Gastrocnemius medialis (tissue), 4 donors: ENCODE measurements at regions of chr15 and their contacts with region 1.

Region 1: DNA sequence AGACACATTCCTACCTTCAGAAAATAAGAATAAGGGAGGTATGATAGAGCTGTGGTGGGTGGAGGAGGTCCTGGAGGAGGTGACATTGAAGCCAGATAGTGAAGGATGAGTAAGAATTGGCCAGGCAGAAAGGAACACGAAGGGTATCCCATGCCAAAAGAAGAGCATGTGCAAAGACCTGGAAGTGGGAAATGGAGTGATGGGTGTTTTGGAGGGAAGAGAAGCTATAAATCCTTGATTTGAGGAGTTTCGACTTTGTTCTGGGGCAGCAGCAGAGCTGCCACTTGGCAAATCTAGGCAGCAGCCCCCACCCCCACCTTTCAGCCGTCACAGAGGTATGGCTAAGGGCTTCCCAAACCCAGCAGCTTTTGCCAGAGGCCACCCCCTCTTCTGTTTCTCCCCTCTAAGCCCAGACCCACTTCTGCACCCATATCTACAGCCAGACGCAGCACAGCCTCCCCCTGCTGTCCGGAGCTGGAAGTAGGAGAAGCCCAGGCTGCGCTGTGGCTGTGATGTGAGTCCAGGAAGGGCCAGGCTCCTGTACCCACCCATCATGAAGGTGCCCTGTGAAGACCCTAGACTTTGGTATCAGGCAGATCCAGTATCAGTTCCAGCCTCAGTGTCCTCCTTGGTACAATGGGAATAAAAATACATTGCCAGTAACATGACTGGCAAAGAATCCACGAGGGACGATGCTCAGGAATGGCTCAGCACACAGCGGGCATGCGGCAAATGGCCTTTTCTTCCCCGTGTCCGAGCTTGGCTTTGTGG is 188.7 kb upstream of the LINGO1 start:
- DNase-seq: no peak
- ATAC-seq: no peak
- H3K4me3 ChIP-seq: no peak overlapping the region
- H3K27ac ChIP-seq: no peak overlapping the region
- H3K4me1 ChIP-seq: no peaks in the 10 kb centered on the region
- H3K27me3 ChIP-seq: peaks cover 24 to 40% (median 34%) of the 10 kb centered on the region in 3 donors
- CTCF ChIP-seq: peak in 2 of 5 experiments; percentile 37 to 58
- POLR2A ChIP-seq: no peak

Region 2: DNA sequence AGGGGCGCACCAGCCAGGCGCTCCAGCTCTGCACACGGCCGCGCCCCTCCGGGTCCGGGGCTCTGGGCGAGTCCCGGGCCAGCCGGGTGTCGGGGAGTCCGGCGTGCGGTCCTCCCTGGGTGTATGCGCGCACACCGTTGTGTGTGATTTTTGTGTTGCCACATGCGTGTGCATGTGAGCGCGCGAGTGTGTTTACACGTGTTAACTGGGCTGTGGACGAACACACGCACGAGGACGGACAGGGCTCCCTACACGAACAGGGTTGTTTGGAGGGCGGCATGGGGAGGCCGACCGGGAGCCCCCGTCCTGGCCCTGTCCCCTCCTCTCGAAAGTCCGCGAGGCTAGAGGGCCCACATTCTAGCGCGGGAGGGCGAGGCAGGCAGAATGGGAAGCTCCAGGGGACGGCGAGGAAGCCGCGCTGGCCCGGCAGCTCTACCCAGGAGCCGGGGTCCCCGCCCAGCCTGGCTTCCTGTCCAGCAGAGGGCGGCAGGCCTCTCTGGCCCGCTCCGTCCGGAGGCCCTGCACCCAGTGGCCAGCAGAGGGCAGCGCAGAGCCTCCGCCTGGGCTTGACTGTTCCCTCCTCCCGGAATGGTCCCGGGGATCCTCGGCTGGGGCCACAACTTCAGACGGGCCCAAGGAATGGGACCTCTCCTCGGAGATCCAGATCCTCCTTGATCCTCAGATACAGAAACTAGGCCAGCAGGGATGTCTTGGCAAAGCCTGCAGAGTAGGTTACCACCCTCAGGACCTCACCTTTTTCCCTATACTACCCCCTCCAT is 188.1 kb before region 1 on chr15:
- in situ Hi-C with region 1: no loop called
- intact Hi-C with region 1: loop called (anchors 2 kb)
- DNase-seq: peak; percentile 54 to 68
- ATAC-seq: peak; percentile 77 to 86
- H3K4me3 ChIP-seq: peak overlapping the region; percentile 54 to 73 (median 60)
- H3K27ac ChIP-seq: no peak overlapping the region
- H3K4me1 ChIP-seq: peaks cover 0 to 11% of the 10 kb centered on the region in 2 donors
- H3K27me3 ChIP-seq: peaks cover 42 to 48% (median 45%) of the 10 kb centered on the region in 3 donors
- CTCF ChIP-seq: peak; percentile 88 to 100 (median 96)
- POLR2A ChIP-seq: no peak